Astrocyte of the cerebellum (primary cell): ENCODE measurements at regions of chr1 and their contacts with region 1.

Region 1: GRCh38 chr1:87030740-87031690 is 116.6 kb downstream of the HS2ST1 start:
- DNase-seq: no peak
- H3K4me3 ChIP-seq: no peak overlapping the region
- CTCF ChIP-seq: no peak

Region 2: GRCh38 chr1:86998727-86999126 is 32.3 kb before region 1 on chr1:
- in situ Hi-C with region 1: loop called (anchors 5 kb)
- DNase-seq: peak; percentile 5
- H3K4me3 ChIP-seq: no peak overlapping the region
- CTCF ChIP-seq: no peak